Gastrocnemius medialis (tissue), 4 donors: ENCODE measurements at regions of chr11 and their contacts with region 1.

Region 1: GRCh38 chr11:61161190-61162091 is at the start of gene VPS37C:
- DNase-seq: peak; percentile 67 to 77
- ATAC-seq: peak; percentile 91 to 93
- H3K4me3 ChIP-seq: peak within 1 kb of the TSS; percentile 64 to 94 (median 70)
- H3K27ac ChIP-seq: peak within 1 kb of the TSS; percentile 86 to 97 (median 96)
- H3K4me1 ChIP-seq: peaks cover 23 to 29% of the 10 kb centered on the region in 2 donors
- H3K27me3 ChIP-seq: no peaks in the 10 kb centered on the region
- CTCF ChIP-seq: peak in 2 of 5 experiments; percentile 19 to 42
- POLR2A ChIP-seq: peak; percentile 60
- total RNA-seq, gene VPS37C: 17.7 to 27.1 (median 23.5) TPM

Region 2: DNA sequence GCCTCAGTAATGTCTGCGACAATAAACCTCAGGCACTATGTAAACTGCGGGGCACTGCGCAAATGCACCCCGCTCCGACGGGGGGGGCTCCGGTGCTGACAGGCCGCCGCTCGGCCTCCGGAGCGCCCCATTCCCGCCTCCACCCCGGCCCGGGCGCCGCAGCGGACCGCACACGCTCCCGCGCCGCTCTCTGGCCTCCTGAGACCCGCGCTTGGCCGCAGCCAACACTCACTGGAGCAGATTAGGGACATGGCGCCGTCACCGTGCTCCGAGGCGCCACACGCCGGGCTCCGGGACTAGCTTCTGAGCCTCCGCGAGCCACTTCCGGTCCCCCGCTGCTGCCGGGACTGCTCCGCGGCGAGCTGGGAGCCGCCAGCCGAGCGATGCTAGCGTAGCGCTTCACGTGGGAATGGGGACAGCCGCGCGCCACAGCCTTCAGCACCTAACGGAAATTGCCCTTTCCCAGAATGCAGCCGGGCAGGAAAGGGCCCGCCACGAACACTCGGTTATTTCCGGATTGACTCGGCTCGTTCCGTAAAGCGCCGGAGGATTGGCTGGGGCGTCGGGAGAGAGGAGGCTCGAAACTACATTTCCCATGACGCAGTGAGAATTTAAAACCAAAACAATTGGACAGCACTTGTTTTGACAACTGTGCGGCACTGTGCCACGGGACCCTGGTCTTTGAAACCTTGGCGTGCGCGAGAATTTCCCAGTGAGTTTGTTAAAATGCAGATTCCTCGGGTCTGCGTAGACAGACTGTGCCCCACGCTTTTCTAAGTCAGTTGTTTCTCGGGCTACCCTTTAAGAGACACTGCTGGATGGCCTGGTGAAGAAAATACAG is 255.1 kb before region 1 on chr11 and contains the start of gene PRPF19:
- in situ Hi-C with region 1: loop called in 1 of 4 experiments (anchors 25 kb)
- intact Hi-C with region 1: loop called (anchors 1 kb)
- DNase-seq: peak; percentile 96 to 97
- ATAC-seq: peak; percentile 95 to 96
- H3K4me3 ChIP-seq: peak within 1 kb of the TSS; percentile 78 to 100 (median 94)
- H3K27ac ChIP-seq: peak within 1 kb of the TSS; percentile 90 to 100 (median 98)
- H3K4me1 ChIP-seq: peaks cover 23 to 24% of the 10 kb centered on the region in 2 donors
- H3K27me3 ChIP-seq: no peaks in the 10 kb centered on the region
- CTCF ChIP-seq: no peak
- POLR2A ChIP-seq: peak; percentile 81 to 88
- total RNA-seq, gene PRPF19: 55.5 to 75.6 (median 71.9) TPM

Region 3: DNA sequence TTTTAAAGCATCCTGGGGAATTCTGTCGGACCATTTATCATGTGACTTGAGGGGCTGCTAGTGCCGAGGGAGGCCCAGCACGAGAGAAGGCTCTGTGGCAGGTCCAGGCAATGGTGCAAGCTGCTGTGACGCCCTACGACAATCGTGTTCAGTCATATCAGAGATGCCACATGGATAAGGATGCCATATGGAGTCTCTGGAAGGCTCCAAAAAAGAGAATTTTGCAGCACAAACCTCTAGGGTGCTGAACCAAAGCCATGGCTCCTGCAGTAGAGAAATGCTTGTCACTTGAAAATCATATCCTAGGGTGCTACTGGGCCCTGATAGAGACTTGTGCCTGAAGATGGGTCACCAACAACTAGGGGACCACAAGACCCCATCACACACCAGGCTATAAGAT is 196.6 kb before region 1 on chr11:
- in situ Hi-C with region 1: no loop called
- intact Hi-C with region 1: no loop called
- DNase-seq: no peak
- ATAC-seq: no peak
- H3K4me3 ChIP-seq: no peak overlapping the region
- H3K27ac ChIP-seq: no peak overlapping the region
- H3K4me1 ChIP-seq: no peaks in the 10 kb centered on the region
- H3K27me3 ChIP-seq: no peaks in the 10 kb centered on the region
- CTCF ChIP-seq: no peak
- POLR2A ChIP-seq: no peak

Region 4: DNA sequence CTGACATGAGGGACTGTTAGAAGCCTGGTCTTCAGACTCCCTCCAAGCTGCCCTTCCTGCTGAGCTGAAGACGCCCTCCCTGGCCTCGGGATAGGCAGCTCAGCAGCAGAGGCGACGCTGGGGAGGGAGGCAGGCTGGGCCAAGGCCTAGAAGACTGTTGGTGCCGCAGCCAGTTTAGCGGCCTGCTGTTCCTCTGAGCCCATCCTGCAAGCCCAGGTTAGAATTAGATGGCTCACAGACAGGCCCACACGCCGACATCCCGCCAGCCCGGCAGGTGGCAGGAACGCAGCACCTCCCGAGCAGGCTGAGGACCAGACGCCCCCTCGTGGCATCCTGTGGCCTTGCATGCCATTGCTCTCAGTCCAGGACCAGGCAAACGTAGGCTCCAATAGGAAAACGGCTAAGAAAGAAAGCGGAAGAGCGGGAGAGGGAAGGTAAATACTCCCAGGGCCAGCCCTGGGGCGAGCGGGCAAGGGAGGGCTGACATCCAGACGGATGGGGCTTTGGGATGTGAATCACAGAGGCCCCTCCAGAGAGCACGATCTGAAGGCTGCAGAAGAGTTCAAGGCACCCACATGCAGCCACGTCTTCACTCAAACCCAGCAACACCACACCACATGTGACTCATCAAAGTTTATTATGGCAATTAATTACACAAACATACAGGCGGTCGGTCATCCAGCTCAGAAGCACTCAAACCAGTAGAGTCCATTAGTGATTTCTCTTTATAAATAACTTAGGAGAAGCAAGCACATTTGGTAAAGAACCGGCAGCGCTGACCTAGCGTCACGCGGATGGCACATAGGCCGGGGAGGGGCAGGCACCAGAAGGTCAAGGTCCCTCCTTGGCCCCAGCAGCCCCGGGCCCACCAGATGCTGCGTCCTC is 31.6 kb before region 1 on chr11:
- in situ Hi-C with region 1: no loop called
- intact Hi-C with region 1: no loop called
- DNase-seq: peak; percentile 53 to 69
- ATAC-seq: peak; percentile 58 to 83
- H3K4me3 ChIP-seq: no peak overlapping the region
- H3K27ac ChIP-seq: peak overlapping the region in 1 of 4 donors; percentile 28
- H3K4me1 ChIP-seq: peaks cover 11 to 14% of the 10 kb centered on the region in 2 donors
- H3K27me3 ChIP-seq: no peaks in the 10 kb centered on the region
- CTCF ChIP-seq: peak; percentile 82 to 96 (median 92)
- POLR2A ChIP-seq: no peak